Calu3 (cell line): ENCODE measurements at regions of chr3 and their contacts with region 1.

Region 1: DNA sequence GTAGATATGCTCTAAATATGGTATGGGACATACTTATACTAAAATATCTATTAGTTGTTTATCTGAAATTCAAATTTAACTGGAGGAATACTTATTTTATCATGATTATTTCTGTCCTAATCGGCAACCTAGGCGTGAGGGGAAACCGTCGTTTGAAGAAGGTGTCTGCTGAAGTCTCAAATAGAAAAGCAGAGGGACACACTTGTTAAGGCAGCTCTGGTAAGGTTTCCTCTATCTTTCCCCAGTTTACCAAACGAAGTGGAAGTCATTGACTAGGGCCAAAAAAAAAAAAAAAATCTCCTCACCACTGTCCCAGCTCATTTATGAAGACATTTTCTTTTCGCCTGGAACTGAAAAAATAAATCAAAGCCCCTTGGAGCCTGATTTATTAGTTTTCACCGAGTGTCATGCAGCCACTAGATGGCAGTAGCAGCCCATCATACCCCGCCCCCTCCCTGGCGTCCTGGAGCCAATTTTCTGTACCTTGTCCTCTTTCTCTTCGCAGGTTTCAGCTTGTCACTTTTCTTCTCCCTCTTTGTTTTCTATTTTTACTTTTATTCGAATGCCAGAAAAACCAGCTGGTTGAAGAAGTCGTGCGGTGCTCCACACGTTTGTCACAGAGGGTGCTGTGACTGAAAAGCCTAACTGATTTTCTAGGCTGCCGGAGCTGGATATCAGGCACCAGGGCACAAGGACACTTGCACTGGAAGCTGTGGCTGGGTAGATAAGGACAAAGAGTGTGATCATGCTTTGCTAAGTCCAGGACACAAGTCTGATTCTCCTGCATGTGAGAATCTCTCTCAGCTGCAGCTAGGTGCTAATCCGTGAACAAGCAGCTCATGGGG is 238.7 kb downstream of the ZPLD1 start:
- DNase-seq: peak; percentile 73
- H3K4me3 Mint-ChIP-seq: peak overlapping the region; percentile 64
- H3K27ac Mint-ChIP-seq: peak overlapping the region; percentile 52
- H3K4me1 Mint-ChIP-seq: peaks cover 8% of the 10 kb centered on the region
- H3K27me3 Mint-ChIP-seq: no peaks in the 10 kb centered on the region
- CTCF ChIP-seq: peak; percentile 75

Region 2: DNA sequence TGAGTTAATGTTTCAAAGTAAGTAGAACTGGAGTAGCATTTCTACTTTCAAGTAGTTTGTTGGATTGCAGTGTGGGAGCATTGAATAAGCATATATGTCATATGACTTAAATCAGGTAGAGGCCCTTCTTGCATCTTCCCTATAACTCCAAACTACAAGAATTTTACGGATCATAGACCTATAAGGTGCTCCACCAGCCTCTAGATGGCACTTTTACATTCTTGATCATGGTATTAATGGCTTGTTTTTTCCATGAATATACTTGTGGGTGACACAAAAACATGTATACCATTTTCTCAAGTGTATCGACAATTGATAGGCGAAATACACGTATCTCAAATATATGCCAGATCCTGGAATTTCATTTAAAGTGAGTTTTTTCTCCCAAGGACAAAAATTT is 72.4 kb after region 1 on chr3:
- CTCF ChIA-PET with region 1: interaction called, 8 read pairs
- intact Hi-C with region 1: loop called (anchors 1 kb)
- DNase-seq: no peak
- H3K4me3 Mint-ChIP-seq: no peak overlapping the region
- H3K27ac Mint-ChIP-seq: no peak overlapping the region
- H3K4me1 Mint-ChIP-seq: no peaks in the 10 kb centered on the region
- H3K27me3 Mint-ChIP-seq: no peaks in the 10 kb centered on the region
- CTCF ChIP-seq: no peak

Region 3: DNA sequence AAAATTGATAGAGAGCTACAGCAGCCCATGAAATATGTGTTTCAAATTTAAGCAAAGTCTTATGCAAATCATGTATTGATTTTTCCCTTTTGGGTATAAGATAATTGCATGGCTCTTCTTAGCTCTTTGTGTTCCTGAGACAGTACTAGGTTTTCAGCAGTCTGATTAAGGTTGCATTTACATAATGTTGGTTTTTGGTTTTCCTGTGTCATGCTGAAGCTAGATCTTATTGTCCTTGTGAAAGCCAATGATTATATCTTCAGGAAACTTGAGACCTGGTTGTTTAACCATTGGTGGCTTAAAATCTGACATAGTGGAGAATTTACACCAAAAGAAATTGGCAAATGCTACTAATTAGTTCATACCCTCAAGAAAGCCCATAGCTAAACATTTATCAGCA is 153.9 kb after region 1 on chr3:
- CTCF ChIA-PET with region 1: no interaction called
- intact Hi-C with region 1: no loop called
- DNase-seq: no peak
- H3K4me3 Mint-ChIP-seq: no peak overlapping the region
- H3K27ac Mint-ChIP-seq: no peak overlapping the region
- H3K4me1 Mint-ChIP-seq: no peaks in the 10 kb centered on the region
- H3K27me3 Mint-ChIP-seq: no peaks in the 10 kb centered on the region
- CTCF ChIP-seq: no peak

Region 4: DNA sequence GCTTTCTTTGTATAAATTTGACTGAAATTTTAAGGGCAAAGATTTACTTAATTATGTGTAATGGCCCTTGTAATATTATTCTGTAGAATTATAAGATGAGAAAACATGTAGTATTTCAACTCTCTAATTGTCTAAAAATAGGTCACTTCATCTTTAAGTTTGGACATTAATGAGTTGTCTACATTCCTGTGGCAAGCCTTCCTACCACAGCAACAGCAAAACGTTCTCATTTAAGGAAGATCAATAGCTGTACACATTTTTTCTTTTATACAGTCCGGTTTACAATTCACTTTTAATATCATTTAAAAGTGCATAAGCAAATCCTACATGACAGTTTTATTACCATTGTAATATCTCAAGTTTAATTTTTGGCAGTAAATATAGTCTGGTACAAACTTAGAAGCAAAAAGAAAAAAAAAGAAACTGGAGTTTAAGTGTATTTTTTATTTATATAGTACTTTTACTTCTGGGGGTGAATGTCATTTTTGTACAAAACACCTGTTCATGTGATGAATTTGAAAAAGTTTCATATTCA is 263.1 kb after region 1 on chr3:
- CTCF ChIA-PET with region 1: no interaction called
- intact Hi-C with region 1: no loop called
- DNase-seq: no peak
- H3K4me3 Mint-ChIP-seq: no peak overlapping the region
- H3K27ac Mint-ChIP-seq: no peak overlapping the region
- H3K4me1 Mint-ChIP-seq: no peaks in the 10 kb centered on the region
- H3K27me3 Mint-ChIP-seq: no peaks in the 10 kb centered on the region
- CTCF ChIP-seq: no peak

Region 5: GRCh38 chr3:103127737-103128136 is 454.2 kb after region 1 on chr3:
- CTCF ChIA-PET with region 1: no interaction called
- intact Hi-C with region 1: loop called (anchors 5 kb)
- DNase-seq: no peak
- H3K4me3 Mint-ChIP-seq: no peak overlapping the region
- H3K27ac Mint-ChIP-seq: no peak overlapping the region
- H3K4me1 Mint-ChIP-seq: peaks cover 25% of the 10 kb centered on the region
- H3K27me3 Mint-ChIP-seq: no peaks in the 10 kb centered on the region
- CTCF ChIP-seq: no peak

Region 6: GRCh38 chr3:103295974-103296570 is 622.6 kb after region 1 on chr3:
- CTCF ChIA-PET with region 1: no interaction called
- intact Hi-C with region 1: loop called (anchors 10 kb)
- DNase-seq: no peak
- H3K4me3 Mint-ChIP-seq: no peak overlapping the region
- H3K27ac Mint-ChIP-seq: no peak overlapping the region
- H3K4me1 Mint-ChIP-seq: no peaks in the 10 kb centered on the region
- H3K27me3 Mint-ChIP-seq: no peaks in the 10 kb centered on the region
- CTCF ChIP-seq: peak; percentile 35

Region 7: DNA sequence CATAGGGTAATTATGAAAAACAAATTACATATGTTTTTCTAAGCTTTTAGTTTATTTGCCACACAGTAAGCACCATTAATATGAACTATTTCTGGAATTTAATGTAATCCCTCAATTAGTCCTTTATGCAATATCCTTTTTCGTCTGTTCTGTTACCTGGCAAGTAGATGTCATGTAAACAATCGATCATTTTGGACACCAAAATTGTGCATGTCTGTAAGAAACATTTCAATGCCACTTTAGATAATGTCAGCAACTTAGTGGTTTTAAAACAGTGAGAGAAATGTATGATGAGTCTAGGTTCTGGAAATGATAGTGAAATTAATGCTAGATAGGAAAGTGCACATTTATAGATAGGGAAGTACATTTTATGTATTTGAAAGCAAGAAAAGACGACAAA is 748.0 kb after region 1 on chr3:
- CTCF ChIA-PET with region 1: no interaction called
- intact Hi-C with region 1: loop called (anchors 10 kb)
- DNase-seq: no peak
- H3K4me3 Mint-ChIP-seq: no peak overlapping the region
- H3K27ac Mint-ChIP-seq: no peak overlapping the region
- H3K4me1 Mint-ChIP-seq: no peaks in the 10 kb centered on the region
- H3K27me3 Mint-ChIP-seq: no peaks in the 10 kb centered on the region
- CTCF ChIP-seq: no peak

Region 8: DNA sequence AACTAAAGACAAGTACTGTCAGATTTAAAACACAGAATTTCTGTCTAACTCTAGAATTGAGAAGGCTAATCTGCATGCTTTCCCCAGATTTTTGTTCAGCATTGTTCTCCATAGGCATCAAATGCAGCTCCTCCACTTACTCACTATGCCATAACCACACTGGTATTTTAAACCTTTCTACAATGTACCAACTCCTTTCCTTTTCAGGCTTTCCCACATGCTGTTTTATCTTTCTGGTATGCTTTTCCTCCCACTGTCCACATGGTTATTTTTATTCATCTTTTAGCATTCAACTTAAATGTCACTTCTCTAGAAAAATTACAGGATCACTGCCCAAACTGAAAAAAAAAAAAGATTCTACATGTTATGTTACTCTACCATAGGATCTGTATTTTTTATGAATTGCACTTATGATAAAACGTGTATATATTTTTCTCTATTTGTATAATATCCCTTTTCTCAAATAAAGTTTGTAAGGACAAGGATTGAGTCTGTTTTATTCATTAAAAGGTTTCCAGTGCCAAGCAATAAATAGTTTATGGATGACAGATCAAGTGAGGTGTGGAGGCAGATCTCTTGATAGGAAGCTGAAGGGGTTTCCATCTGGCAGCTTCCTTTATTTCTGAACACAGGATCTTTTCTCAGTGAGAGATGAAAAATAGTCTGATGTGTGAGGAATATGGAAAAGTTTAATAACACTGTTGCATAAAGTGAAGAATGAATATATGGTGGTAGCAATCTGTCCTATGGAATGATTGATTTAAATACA is 825.8 kb after region 1 on chr3:
- CTCF ChIA-PET with region 1: no interaction called
- intact Hi-C with region 1: loop called (anchors 10 kb)
- DNase-seq: no peak
- H3K4me3 Mint-ChIP-seq: no peak overlapping the region
- H3K27ac Mint-ChIP-seq: no peak overlapping the region
- H3K4me1 Mint-ChIP-seq: no peaks in the 10 kb centered on the region
- H3K27me3 Mint-ChIP-seq: no peaks in the 10 kb centered on the region
- CTCF ChIP-seq: no peak

Region 9: DNA sequence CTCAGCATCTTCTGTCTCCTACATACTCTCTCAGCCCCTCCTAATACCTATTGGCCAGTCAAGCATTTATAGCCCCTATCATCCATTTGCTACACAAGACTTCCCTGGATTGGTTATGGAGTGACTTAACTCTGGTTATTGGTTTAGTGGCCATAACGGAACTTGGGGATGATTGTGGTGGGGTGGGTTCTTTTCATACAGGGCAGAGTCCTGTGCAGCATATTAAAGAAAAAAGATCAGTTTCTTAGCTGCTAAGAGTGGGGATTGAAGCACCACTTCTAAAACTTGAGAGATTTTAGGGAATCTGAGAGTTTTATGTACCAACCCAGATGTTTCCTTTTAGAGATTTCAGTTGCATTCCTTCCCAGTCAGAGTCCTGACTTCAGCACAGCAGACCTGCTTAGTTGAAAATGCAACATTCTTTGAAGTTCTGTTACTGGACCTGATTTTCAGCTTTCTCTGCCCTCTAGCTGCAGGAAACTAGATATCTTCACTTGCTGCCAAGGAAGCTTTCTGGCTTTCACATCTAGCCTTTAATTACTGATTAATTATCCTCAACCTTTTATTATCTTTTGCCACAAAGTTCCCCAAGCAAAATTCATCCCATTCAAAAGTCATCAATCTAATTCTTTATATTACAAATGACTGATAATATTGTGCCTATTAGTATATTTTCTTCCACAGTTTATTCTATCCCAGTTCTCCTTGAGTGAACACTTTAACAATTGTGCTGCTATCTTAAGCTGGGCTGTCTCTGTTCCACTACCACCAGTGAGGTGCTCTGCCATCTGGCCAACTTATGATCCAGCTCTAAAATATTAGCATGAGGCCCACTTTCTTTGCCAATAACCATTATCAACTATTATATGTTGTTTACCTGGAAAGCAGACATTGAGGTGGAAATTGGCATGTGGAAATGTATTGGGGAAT is 1787.2 kb after region 1 on chr3:
- CTCF ChIA-PET with region 1: no interaction called
- intact Hi-C with region 1: loop called (anchors 5 kb)
- DNase-seq: peak; percentile 11
- H3K4me3 Mint-ChIP-seq: no peak overlapping the region
- H3K27ac Mint-ChIP-seq: no peak overlapping the region
- H3K4me1 Mint-ChIP-seq: peaks cover 24% of the 10 kb centered on the region
- H3K27me3 Mint-ChIP-seq: no peaks in the 10 kb centered on the region
- CTCF ChIP-seq: no peak